Transverse colon (tissue), 4 donors: ENCODE measurements at regions of chr6 and their contacts with region 1.

Region 1: GRCh38 chr6:123715006-123715875 is 78.5 kb upstream of the TRDN start:
- DNase-seq: no peak
- H3K4me3 ChIP-seq: no peak overlapping the region
- H3K27ac ChIP-seq: no peak overlapping the region
- H3K4me1 ChIP-seq: no peaks in the 10 kb centered on the region
- H3K27me3 ChIP-seq: no peaks in the 10 kb centered on the region
- CTCF ChIP-seq: peak in 4 of 5 experiments; percentile 15 to 40 (median 19)
- EP300 ChIP-seq: no peak
- POLR2A ChIP-seq: no peak

Region 2: DNA sequence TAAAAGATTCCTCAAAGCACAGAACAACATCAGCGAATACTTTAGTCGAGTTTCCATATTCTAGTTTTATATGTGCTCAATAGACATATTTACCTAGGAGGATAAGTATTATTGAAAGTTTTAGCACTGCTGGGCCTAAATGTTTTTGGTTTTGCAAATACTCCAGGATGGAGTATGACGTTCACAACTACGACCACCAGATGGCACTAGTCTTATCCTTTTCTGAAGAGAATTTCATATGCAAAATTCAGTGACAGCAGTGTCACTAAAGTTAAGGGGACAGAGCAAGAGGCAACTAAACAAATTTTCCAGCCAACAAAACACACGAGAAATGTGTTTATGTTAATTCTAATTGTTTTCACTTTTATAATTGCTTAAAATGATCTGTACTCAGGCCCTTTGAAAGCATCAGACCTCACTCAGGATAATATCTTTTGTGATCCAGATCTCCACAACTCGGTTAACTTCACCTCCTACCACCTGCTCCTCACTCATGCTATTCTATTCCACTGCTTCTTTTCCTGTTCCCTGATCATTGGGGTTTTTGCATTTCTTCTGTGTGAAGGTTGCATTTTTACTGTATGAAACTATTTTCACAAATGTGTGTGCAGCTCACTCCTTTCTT is 299.3 kb before region 1 on chr6:
- in situ Hi-C with region 1: loop called in 3 of 4 experiments (anchors 10 to 25 kb)
- intact Hi-C with region 1: no loop called
- DNase-seq: peak; percentile 13
- H3K4me3 ChIP-seq: no peak overlapping the region
- H3K27ac ChIP-seq: no peak overlapping the region
- H3K4me1 ChIP-seq: no peaks in the 10 kb centered on the region
- H3K27me3 ChIP-seq: no peaks in the 10 kb centered on the region
- CTCF ChIP-seq: peak; percentile 25 to 63 (median 62)
- EP300 ChIP-seq: no peak
- POLR2A ChIP-seq: no peak